Transverse colon (tissue), 4 donors: ENCODE measurements at regions of chr12 and their contacts with region 1.

Region 1: GRCh38 chr12:46342562-46343033 is 30.0 kb downstream of the SLC38A2 start:
- DNase-seq: peak; percentile 15
- H3K4me3 ChIP-seq: no peak overlapping the region
- H3K27ac ChIP-seq: no peak overlapping the region
- H3K4me1 ChIP-seq: no peaks in the 10 kb centered on the region
- H3K27me3 ChIP-seq: no peaks in the 10 kb centered on the region
- CTCF ChIP-seq: peak; percentile 41 to 54 (median 53)
- EP300 ChIP-seq: no peak
- POLR2A ChIP-seq: no peak

Region 2: DNA sequence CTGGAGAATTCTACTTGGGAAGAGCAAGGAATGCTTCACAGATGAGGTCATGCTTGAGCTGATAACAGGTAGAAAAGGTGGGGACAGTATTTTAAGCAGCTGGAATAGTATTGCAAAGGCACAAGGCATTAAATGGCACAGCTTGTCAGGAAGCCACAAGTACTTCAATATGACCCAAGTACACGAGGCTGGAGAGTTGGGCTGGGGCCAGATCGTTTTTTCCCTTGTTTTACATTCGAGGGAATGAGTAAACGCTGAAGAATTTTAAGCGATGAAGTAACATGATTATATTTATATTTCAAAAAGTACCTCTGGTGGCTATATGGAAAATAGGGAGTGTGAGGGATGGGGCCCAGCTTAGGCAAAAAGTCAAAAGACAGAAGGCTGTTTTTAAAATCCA is 668.0 kb before region 1 on chr12:
- in situ Hi-C with region 1: no loop called
- intact Hi-C with region 1: no loop called
- DNase-seq: no peak
- H3K4me3 ChIP-seq: no peak overlapping the region
- H3K27ac ChIP-seq: peak overlapping the region in 1 of 4 donors; percentile 29
- H3K4me1 ChIP-seq: peaks cover 0 to 3% (median 1%) of the 10 kb centered on the region in 4 donors
- H3K27me3 ChIP-seq: no peaks in the 10 kb centered on the region
- CTCF ChIP-seq: no peak
- EP300 ChIP-seq: no peak
- POLR2A ChIP-seq: no peak

Region 3: DNA sequence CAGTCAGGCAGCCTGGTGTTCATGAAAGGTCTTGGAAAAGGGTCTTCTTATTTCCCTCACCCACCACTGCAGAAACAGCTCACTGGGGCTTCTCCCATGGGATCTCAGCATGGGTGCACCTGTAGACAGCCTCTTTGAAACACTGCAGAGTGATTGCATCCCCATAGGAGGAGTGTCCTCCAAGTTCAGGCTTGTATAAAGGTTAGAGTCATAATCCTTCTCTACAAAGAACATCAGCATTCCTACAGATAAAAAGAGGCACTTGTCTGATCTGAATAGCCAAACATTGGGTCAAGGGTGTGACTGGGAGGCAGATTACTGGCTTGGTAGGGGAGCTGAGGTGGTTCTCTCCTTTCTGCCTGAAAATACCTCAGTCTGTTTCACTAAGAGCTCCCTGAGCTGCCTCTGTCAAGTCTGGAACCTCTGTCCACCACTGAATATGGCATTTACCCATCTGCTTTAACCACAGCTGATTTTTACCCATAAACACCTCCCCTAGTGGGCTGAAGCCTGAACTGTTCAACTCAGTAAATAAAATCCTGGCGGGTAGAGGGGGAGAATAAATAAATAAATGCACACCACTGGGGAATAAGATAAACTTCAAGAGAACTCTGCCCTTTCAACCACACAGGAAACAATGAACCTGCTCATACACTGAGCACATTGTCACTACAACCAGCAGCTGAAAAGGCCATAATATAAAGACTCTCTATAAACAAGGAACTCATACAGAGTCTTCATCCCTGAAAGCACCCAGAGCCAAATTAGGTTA is 231.5 kb before region 1 on chr12:
- in situ Hi-C with region 1: no loop called
- intact Hi-C with region 1: no loop called
- DNase-seq: no peak
- H3K4me3 ChIP-seq: no peak overlapping the region
- H3K27ac ChIP-seq: no peak overlapping the region
- H3K4me1 ChIP-seq: no peaks in the 10 kb centered on the region
- H3K27me3 ChIP-seq: no peaks in the 10 kb centered on the region
- CTCF ChIP-seq: peak in 2 of 5 experiments; percentile 4 to 13
- EP300 ChIP-seq: no peak
- POLR2A ChIP-seq: no peak

Region 4: DNA sequence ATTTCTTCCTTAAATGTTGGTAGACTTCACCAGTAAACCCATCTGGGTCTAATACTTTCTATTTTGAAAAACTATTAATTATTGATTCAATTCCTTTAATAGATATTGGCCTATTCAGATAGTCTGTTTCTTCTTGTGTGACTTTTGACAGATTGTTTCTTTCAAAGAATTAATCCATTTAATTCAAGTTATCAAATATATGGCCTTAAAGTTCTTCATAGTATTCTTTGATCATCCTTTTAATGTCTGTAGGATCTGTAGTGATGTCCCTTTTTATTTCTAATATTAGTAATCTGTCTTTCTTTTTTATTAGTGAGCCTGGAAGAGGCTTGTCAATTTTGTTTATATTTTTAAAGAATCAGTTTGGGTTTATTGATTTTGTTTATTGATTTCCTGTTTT is 293.2 kb after region 1 on chr12:
- in situ Hi-C with region 1: no loop called
- intact Hi-C with region 1: no loop called
- DNase-seq: no peak
- H3K4me3 ChIP-seq: no peak overlapping the region
- H3K27ac ChIP-seq: no peak overlapping the region
- H3K4me1 ChIP-seq: no peaks in the 10 kb centered on the region
- H3K27me3 ChIP-seq: no peaks in the 10 kb centered on the region
- CTCF ChIP-seq: no peak
- EP300 ChIP-seq: no peak
- POLR2A ChIP-seq: no peak

Region 5: GRCh38 chr12:47021298-47021697 is 678.7 kb after region 1 on chr12:
- in situ Hi-C with region 1: loop called (anchors 10 to 25 kb)
- intact Hi-C with region 1: no loop called
- DNase-seq: no peak
- H3K4me3 ChIP-seq: no peak overlapping the region
- H3K27ac ChIP-seq: no peak overlapping the region
- H3K4me1 ChIP-seq: no peaks in the 10 kb centered on the region
- H3K27me3 ChIP-seq: peaks cover 4% of the 10 kb centered on the region
- CTCF ChIP-seq: peak; percentile 57 to 71 (median 64)
- EP300 ChIP-seq: no peak
- POLR2A ChIP-seq: no peak